ENCODE measurements at regions of chr1 and their contacts with region 1.

Region 1: DNA sequence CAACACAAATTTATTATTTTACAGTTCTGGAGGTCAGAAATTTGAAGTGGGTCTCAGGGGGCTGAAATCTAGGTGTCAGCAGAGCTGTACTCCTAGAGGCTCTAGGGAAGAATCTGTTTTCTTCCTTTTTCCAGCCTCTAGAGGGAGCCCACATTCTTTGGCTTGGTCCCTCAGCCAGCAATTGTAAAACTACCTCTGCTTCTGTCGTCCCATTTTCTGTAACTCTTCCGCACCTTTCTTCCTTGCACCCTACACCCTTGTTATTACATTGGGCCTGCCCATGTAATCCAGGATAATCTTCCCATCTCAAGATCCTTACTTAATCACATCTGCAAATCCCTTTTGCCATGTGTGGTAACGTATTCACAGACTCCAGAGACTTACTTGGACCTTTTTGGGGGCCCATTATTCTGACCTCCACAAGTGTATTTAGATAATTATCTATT is 24.8 kb upstream of the THEM4 start:
- DNase-seq: peak in 7 of 9 donors; percentile 31 to 69 (median 59)
- ATAC-seq: peak; percentile 94
- H3K4me3 ChIP-seq: no peak overlapping the region
- H3K4me3 Mint-ChIP-seq: peak overlapping the region in 1 of 10 donors; percentile 49
- H3K27ac ChIP-seq: no peak overlapping the region
- H3K27ac Mint-ChIP-seq: peak overlapping the region in 1 of 9 donors; percentile 41
- H3K4me1 ChIP-seq: no peaks in the 10 kb centered on the region
- H3K4me1 Mint-ChIP-seq: peaks cover 0 to 6% (median 4%) of the 10 kb centered on the region in 7 donors
- H3K27me3 ChIP-seq: no peaks in the 10 kb centered on the region
- H3K27me3 Mint-ChIP-seq: peaks cover 0 to 33% (median 0%) of the 10 kb centered on the region in 5 donors

Region 2: DNA sequence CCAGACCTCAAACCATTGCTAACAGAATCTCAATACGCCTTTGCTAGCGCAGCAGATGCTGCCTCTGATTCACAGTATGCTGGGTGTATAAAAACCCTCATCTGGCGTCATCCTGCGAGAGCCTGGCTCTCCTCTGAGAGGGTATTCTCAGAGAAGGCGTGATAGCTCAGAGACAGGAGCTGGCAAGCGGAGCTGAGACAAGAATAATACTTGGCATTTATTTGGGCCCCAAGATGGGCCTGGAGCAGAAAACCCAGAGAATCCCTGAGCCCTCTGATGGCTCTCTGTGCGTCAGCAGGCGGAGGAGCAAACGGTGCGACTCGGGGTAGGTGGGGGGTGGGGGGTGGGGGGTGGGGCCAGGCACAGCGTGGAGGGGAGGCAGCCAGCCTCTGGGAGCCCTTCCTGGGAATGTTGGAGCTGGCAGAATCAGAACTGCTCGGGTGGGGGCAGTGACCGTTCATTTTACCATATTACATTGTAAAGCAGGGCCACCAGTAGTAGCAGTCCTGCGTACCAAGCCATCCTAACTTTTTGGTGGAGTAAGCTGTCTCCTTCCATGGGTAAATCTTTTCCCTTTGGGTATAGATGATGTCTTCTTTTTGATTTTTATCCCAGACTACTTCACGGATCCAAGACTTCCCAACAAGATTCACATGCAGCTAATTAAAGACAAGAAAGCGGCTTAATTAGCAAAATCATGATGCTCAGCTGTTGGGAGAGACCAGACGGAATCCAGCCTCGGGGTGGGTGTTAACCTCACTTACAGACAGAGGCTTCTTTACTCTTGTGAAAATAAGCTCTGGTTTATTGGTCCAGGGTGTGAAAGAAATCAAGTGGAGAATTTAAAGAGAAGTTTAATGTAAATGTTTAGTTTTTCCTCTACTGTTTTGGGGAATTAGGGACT is 205.7 kb before region 1 on chr1:
- CTCF ChIA-PET with region 1: no interaction called
- POLR2A ChIA-PET with region 1: no interaction called
- intact Hi-C with region 1: no loop called
- DNase-seq: no peak
- ATAC-seq: no peak
- H3K4me3 ChIP-seq: no peak overlapping the region
- H3K4me3 Mint-ChIP-seq: no peak overlapping the region
- H3K27ac ChIP-seq: no peak overlapping the region
- H3K27ac Mint-ChIP-seq: no peak overlapping the region
- H3K4me1 ChIP-seq: no peaks in the 10 kb centered on the region
- H3K4me1 Mint-ChIP-seq: peaks cover 0 to 3% (median 0%) of the 10 kb centered on the region in 7 donors
- H3K27me3 ChIP-seq: peaks cover 0 to 4% of the 10 kb centered on the region in 2 donors
- H3K27me3 Mint-ChIP-seq: peaks cover 50 to 69% (median 60%) of the 10 kb centered on the region in 5 donors

Region 3: DNA sequence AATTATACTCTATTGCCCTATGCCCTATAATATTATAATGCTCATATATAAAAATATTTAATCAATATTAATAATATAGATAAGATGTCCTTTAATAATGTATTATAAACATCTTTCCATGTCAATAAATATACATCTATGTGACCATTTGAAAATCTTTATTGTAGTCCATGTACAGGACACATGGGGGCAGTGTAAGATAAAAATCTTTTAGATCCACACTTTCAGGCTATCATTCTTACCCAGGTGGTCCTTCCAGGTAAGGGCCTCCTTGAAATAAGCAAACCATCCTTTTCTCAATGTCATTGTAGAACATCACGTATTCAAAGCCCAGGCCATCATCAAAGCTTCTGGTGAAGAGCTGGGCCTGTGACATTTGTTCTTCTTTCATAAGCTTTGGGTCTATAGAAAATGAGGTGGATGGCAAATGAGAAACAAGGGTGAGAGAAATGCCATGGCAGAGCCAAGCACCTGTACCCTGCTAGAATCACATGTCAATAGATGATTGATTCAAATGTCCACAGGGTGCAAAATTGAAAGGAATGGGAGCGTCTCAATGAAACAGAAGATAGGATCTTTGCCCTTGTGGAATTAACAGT is 45.0 kb before region 1 on chr1:
- CTCF ChIA-PET with region 1: interaction called, 18 read pairs
- POLR2A ChIA-PET with region 1: interaction called, 3 read pairs
- intact Hi-C with region 1: loop called (anchors 1 kb)
- DNase-seq: peak in 5 of 9 donors; percentile 27 to 48 (median 37)
- ATAC-seq: peak; percentile 68
- H3K4me3 ChIP-seq: no peak overlapping the region
- H3K4me3 Mint-ChIP-seq: no peak overlapping the region
- H3K27ac ChIP-seq: no peak overlapping the region
- H3K27ac Mint-ChIP-seq: peak overlapping the region in 7 of 9 donors; percentile 7 to 91 (median 70)
- H3K4me1 ChIP-seq: peaks cover 0 to 12% of the 10 kb centered on the region in 2 donors
- H3K4me1 Mint-ChIP-seq: peaks cover 18 to 40% (median 38%) of the 10 kb centered on the region in 7 donors
- H3K27me3 ChIP-seq: no peaks in the 10 kb centered on the region
- H3K27me3 Mint-ChIP-seq: no peaks in the 10 kb centered on the region

Region 4: DNA sequence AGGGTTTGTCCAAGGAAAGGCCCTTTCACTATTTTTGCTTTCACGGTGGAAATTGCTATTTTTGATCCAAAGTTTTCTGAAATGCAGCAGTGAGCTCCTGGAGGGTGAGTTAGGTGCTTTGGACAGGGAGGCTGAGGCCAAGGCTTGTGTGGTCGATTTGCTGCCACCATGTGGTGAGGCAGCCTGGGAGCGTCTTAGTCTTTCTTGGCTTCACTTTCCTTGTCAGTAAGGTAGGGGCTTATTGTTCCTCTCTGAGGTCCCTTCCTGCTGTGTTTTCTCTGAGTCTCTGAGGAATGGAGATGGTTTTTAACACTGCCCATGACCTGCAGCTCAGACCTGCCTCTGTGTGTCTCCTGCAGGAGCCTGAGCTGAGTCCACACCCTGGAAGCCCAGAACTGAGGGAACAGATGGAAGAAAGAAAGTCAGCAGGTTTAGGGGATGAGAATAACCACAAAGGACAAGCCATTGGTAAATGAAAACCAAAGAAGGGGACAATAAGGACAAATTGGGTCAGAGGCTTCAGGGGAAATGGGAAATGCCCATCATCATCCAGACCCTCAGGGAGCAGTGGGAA is 79.7 kb after region 1 on chr1:
- CTCF ChIA-PET with region 1: interaction called, 3 read pairs
- POLR2A ChIA-PET with region 1: no interaction called
- intact Hi-C with region 1: loop called in 1 of 2 experiments (anchors 1 kb)
- DNase-seq: peak in 2 of 9 donors; percentile 19 to 43
- ATAC-seq: peak; percentile 42
- H3K4me3 ChIP-seq: no peak overlapping the region
- H3K4me3 Mint-ChIP-seq: no peak overlapping the region
- H3K27ac ChIP-seq: no peak overlapping the region
- H3K27ac Mint-ChIP-seq: no peak overlapping the region
- H3K4me1 ChIP-seq: no peaks in the 10 kb centered on the region
- H3K4me1 Mint-ChIP-seq: peaks cover 0 to 6% (median 4%) of the 10 kb centered on the region in 7 donors
- H3K27me3 ChIP-seq: no peaks in the 10 kb centered on the region
- H3K27me3 Mint-ChIP-seq: peaks cover 0 to 58% (median 9%) of the 10 kb centered on the region in 5 donors

Measured in naive thymus-derived CD4-positive, alpha-beta T cell (primary cell).